ENCODE measurements at regions of chr5 and their contacts with region 1.

Region 1: DNA sequence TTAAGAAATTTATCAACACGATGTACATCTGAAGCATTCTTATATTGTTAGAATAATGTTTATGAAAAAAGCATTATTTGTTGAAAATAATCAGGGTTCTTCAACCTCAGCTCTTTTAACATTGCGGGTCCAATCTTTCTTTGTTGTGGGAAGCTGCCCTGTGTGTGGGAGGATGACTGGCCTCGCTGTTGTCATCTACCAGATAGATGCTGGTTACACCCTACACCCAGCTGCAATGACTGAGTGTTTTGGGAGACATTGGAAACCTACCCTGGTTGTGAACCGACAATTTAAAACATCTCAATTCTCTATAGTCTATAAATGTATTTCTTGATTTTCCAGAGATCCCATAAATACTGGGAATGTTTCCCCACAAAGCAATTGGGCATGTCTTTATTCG is 794.2 kb upstream of the CDH10 start:
- DNase-seq: no peak
- H3K4me3 ChIP-seq: peak overlapping the region in 1 of 4 experiments; percentile 83; a peak in 3 of 8 replicates
- H3K27ac ChIP-seq: no peak overlapping the region
- H3K4me1 ChIP-seq: peaks cover 0 to 7% (median 0%) of the 10 kb centered on the region in 4 experiments; a peak in 2 of 7 replicates
- H3K27me3 ChIP-seq: no peaks in the 10 kb centered on the region
- CTCF ChIP-seq: no peak
- EP300 ChIP-seq: no peak
- POLR2A ChIP-seq: peak in 1 of 2 experiments; percentile 80; a peak in 2 of 3 replicates
- RAD21 ChIP-seq: no peak

Region 2: DNA sequence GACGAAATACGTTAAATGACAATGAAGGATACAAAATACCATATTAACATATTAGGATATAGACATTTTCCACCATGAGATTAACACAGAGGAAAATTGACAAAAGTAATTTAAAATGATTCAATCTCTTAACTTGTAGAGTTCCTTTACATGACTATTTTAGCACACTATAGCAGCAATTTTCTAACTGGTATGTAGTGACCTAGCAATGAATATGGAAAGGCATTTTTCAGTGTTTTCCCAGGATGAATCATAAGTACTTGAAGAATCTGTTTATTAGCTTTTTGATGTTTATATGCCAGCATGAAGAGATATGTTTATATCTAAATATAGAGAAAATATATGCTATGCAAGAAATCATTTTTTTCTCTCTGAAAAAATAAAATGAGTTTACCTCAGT is 11.8 kb before region 1 on chr5:
- CTCF ChIA-PET with region 1: no interaction called
- POLR2A ChIA-PET with region 1: interaction called, 79 read pairs
- DNase-seq: no peak
- H3K4me3 ChIP-seq: no peak overlapping the region
- H3K27ac ChIP-seq: no peak overlapping the region
- H3K4me1 ChIP-seq: no peaks in the 10 kb centered on the region; a peak in 1 of 7 replicates
- H3K27me3 ChIP-seq: no peaks in the 10 kb centered on the region
- CTCF ChIP-seq: no peak
- EP300 ChIP-seq: no peak
- POLR2A ChIP-seq: no peak
- RAD21 ChIP-seq: no peak

Measured in H1 (cell line).